ENCODE measurements at regions of chr9 and their contacts with region 1.

Region 1: DNA sequence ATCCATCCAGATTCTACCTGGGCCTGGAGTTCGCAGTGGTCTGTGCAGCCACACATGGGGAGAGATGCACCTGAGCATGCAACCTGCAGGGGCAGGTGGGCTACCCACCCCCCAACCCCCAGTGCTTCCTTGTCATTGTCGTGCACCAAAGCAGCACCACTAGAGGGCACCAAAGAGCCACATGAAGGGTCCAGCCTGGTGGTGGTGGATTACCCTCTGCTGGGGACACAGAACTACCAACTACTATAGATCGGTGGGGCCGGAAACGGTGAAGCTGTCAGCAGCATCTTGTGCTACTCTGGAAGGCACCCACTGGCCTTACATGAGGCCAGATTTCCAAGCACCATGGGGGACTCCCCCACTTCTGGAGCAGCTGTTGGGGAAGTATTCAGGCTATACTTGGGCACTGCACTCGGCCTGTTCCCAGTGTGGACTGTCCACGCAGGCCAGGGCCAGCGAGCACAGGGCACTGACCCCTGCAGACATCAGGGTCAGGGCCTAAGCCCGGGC is 60.2 kb upstream of the TBC1D2 start:
- DNase-seq: peak; percentile 60
- H3K4me3 ChIP-seq: no peak overlapping the region
- H3K27ac ChIP-seq: no peak overlapping the region
- H3K4me1 ChIP-seq: peaks cover 3% of the 10 kb centered on the region
- H3K27me3 ChIP-seq: no peaks in the 10 kb centered on the region
- CTCF ChIP-seq: peak; percentile 96 to 98

Region 2: GRCh38 chr9:98074115-98074990 is 241.3 kb before region 1 on chr9:
- CTCF ChIA-PET with region 1: no interaction called
- dilution Hi-C with region 1: no loop called
- in situ Hi-C with region 1: no loop called
- intact Hi-C with region 1: no loop called
- DNase-seq: peak; percentile 33
- H3K4me3 ChIP-seq: no peak overlapping the region
- H3K27ac ChIP-seq: no peak overlapping the region
- H3K4me1 ChIP-seq: no peaks in the 10 kb centered on the region
- H3K27me3 ChIP-seq: no peaks in the 10 kb centered on the region
- CTCF ChIP-seq: peak; percentile 93 to 94

Region 3: GRCh38 chr9:98523231-98523896 is 207.8 kb after region 1 on chr9:
- CTCF ChIA-PET with region 1: no interaction called
- dilution Hi-C with region 1: no loop called
- in situ Hi-C with region 1: loop called in 1 of 2 experiments (anchors 25 kb)
- intact Hi-C with region 1: loop called (anchors 1 kb)
- DNase-seq: peak; percentile 16
- H3K4me3 ChIP-seq: no peak overlapping the region
- H3K27ac ChIP-seq: no peak overlapping the region
- H3K4me1 ChIP-seq: no peaks in the 10 kb centered on the region
- H3K27me3 ChIP-seq: peaks cover 2% of the 10 kb centered on the region
- CTCF ChIP-seq: peak; percentile 43 to 64

Region 4: GRCh38 chr9:98707166-98708102 is 391.8 kb after region 1 on chr9:
- CTCF ChIA-PET with region 1: no interaction called
- dilution Hi-C with region 1: no loop called
- in situ Hi-C with region 1: no loop called
- intact Hi-C with region 1: loop called (anchors 2 kb)
- DNase-seq: peak; percentile 54
- H3K4me3 ChIP-seq: no peak overlapping the region
- H3K27ac ChIP-seq: no peak overlapping the region
- H3K4me1 ChIP-seq: peaks cover 8% of the 10 kb centered on the region
- H3K27me3 ChIP-seq: peaks cover 28% of the 10 kb centered on the region
- CTCF ChIP-seq: peak; percentile 36 to 41

Region 5: GRCh38 chr9:98791147-98792095 is 475.8 kb after region 1 on chr9:
- CTCF ChIA-PET with region 1: no interaction called
- dilution Hi-C with region 1: no loop called
- in situ Hi-C with region 1: no loop called
- intact Hi-C with region 1: loop called (anchors 1 kb)
- DNase-seq: peak; percentile 94
- H3K4me3 ChIP-seq: no peak overlapping the region
- H3K27ac ChIP-seq: peak overlapping the region; percentile 22
- H3K4me1 ChIP-seq: peaks cover 27% of the 10 kb centered on the region
- H3K27me3 ChIP-seq: no peaks in the 10 kb centered on the region
- CTCF ChIP-seq: peak; percentile 95 to 99

Region 6: GRCh38 chr9:99465231-99465907 is 1149.8 kb after region 1 on chr9:
- CTCF ChIA-PET with region 1: no interaction called
- dilution Hi-C with region 1: no loop called
- in situ Hi-C with region 1: loop called in 1 of 2 experiments (anchors 25 kb)
- intact Hi-C with region 1: no loop called
- DNase-seq: no peak
- H3K4me3 ChIP-seq: no peak overlapping the region
- H3K27ac ChIP-seq: no peak overlapping the region
- H3K4me1 ChIP-seq: no peaks in the 10 kb centered on the region
- H3K27me3 ChIP-seq: no peaks in the 10 kb centered on the region
- CTCF ChIP-seq: no peak

Measured in mammary epithelial cell (primary cell).